ENCODE measurements at regions of chr15 and their contacts with region 1.

Region 1: GRCh38 chr15:39934397-39935071 is 619 bp downstream of the EIF2AK4 start:
- DNase-seq: peak in 5 of 9 donors; percentile 5 to 14 (median 9)
- ATAC-seq: no peak
- H3K4me3 ChIP-seq: peak overlapping the region; percentile 76
- H3K4me3 Mint-ChIP-seq: peak overlapping the region; percentile 86 to 95 (median 89)
- H3K27ac ChIP-seq: peak overlapping the region; percentile 78
- H3K27ac Mint-ChIP-seq: peak overlapping the region; percentile 20 to 91 (median 64)
- H3K4me1 ChIP-seq: peaks cover 14 to 16% of the 10 kb centered on the region in 2 donors
- H3K4me1 Mint-ChIP-seq: peaks cover 28 to 50% (median 33%) of the 10 kb centered on the region in 7 donors
- H3K27me3 ChIP-seq: no peaks in the 10 kb centered on the region
- H3K27me3 Mint-ChIP-seq: peaks cover 0 to 6% (median 0%) of the 10 kb centered on the region in 5 donors

Region 2: DNA sequence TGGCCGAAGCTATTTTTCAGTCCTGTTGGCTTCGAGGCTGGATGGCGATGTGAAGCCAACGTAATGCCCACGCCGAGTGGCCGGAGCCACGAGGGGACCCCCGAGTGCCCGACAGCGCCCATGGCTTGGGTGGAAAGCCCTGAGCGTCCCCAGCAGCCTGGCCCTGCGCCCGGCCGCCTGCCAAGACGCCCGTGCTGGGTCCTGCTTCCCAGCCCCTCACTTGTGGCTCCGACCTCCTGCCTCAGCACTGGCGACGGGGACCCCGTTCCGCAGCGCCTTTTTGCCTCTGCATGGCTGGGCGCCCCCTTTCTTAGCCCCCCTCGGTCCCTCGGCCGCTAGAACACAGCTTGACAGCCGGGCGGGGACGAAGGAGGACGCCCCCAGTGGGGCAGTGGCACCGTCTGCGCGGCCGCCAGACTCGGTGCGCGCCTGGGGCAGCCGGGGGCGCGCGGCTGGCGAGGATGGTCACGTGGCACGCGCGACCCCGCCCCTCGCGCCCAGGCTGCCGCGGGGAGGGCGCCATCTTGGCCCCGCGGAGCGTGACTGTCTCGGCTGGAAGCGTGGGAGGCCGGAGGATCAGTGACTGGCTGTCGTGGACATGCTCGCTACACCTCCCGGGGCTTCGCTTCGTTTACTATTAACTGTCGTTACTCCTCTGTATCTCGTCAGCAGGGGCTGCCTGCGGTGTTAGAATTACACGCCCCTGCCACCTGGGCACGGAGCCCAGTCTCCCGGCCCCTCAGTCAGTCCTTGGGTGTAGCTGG is 13.8 kb before region 1 on chr15:
- CTCF ChIA-PET with region 1: no interaction called
- POLR2A ChIA-PET with region 1: interaction called, 19 read pairs
- intact Hi-C with region 1: loop called (anchors 1 kb)
- DNase-seq: peak; percentile 58 to 86 (median 73)
- ATAC-seq: peak; percentile 97
- H3K4me3 ChIP-seq: peak overlapping the region; percentile 80
- H3K4me3 Mint-ChIP-seq: peak overlapping the region; percentile 75 to 92 (median 88)
- H3K27ac ChIP-seq: no peak overlapping the region
- H3K27ac Mint-ChIP-seq: peak overlapping the region in 8 of 9 donors; percentile 43 to 90 (median 77)
- H3K4me1 ChIP-seq: peaks cover 0 to 5% of the 10 kb centered on the region in 2 donors
- H3K4me1 Mint-ChIP-seq: peaks cover 6 to 29% (median 12%) of the 10 kb centered on the region in 7 donors
- H3K27me3 ChIP-seq: peaks cover 5 to 15% of the 10 kb centered on the region in 2 donors
- H3K27me3 Mint-ChIP-seq: peaks cover 14 to 32% (median 23%) of the 10 kb centered on the region in 5 donors

Region 3: GRCh38 chr15:39966521-39966920 is 32.0 kb after region 1 on chr15:
- CTCF ChIA-PET with region 1: no interaction called
- POLR2A ChIA-PET with region 1: no interaction called
- intact Hi-C with region 1: loop called in 1 of 2 experiments (anchors 5 kb)
- DNase-seq: no peak
- ATAC-seq: no peak
- H3K4me3 ChIP-seq: no peak overlapping the region
- H3K4me3 Mint-ChIP-seq: no peak overlapping the region
- H3K27ac ChIP-seq: no peak overlapping the region
- H3K27ac Mint-ChIP-seq: no peak overlapping the region
- H3K4me1 ChIP-seq: no peaks in the 10 kb centered on the region
- H3K4me1 Mint-ChIP-seq: peaks cover 0 to 11% (median 0%) of the 10 kb centered on the region in 7 donors
- H3K27me3 ChIP-seq: no peaks in the 10 kb centered on the region
- H3K27me3 Mint-ChIP-seq: no peaks in the 10 kb centered on the region

Measured in naive thymus-derived CD4-positive, alpha-beta T cell (primary cell).